Calu3 (cell line): ENCODE measurements at regions of chr6 and their contacts with region 1.

Region 1: GRCh38 chr6:37850728-37851285 is 31.3 kb downstream of the ZFAND3 start:
- DNase-seq: peak; percentile 28
- H3K4me3 Mint-ChIP-seq: no peak overlapping the region
- H3K27ac Mint-ChIP-seq: peak overlapping the region; percentile 45
- H3K4me1 Mint-ChIP-seq: peaks cover 46% of the 10 kb centered on the region
- H3K27me3 Mint-ChIP-seq: no peaks in the 10 kb centered on the region
- CTCF ChIP-seq: no peak

Region 2: GRCh38 chr6:37897321-37897720 is 46.5 kb after region 1 on chr6:
- CTCF ChIA-PET with region 1: interaction called, 3 read pairs
- intact Hi-C with region 1: loop called (anchors 5 kb)
- DNase-seq: peak; percentile 24
- H3K4me3 Mint-ChIP-seq: no peak overlapping the region
- H3K27ac Mint-ChIP-seq: no peak overlapping the region
- H3K4me1 Mint-ChIP-seq: peaks cover 24% of the 10 kb centered on the region
- H3K27me3 Mint-ChIP-seq: no peaks in the 10 kb centered on the region
- CTCF ChIP-seq: no peak